HepG2 (cell line): ENCODE measurements at regions of chr6 and their contacts with region 1.

Region 1: DNA sequence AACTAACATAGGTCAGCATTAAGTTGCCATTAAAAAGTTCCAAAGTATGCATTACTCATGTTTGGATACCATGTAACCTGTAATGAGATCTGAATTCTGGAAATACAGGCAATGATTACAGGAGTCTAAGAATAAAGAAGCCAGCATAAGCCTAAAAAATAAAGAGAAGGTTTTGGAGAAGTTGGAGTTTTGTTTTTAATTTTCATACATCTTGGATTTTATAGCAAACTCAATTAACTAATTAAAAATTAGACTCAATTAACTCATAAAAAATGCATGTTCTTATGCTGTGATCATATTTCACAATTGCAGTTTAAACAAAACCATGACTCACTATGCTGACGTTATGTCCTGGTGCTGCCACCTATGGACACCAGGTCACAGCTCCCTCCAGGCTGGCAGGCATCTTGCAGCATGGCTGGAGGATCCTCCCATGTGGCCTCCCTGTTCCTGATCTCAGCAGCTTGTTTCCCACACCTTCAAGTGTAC is 648.8 kb upstream of the AGPAT4 start:
- DNase-seq: peak; percentile 78
- ATAC-seq: peak; percentile 100
- H3K4me3 ChIP-seq: no peak overlapping the region
- H3K27ac ChIP-seq: no peak overlapping the region
- H3K4me1 ChIP-seq: no peaks in the 10 kb centered on the region
- H3K27me3 ChIP-seq: no peaks in the 10 kb centered on the region
- CTCF ChIP-seq: peak; percentile 82
- EP300 ChIP-seq: no peak
- POLR2A ChIP-seq: no peak
- RAD21 ChIP-seq: no peak

Region 2: GRCh38 chr6:161748535-161749416 is 173.9 kb before region 1 on chr6:
- CTCF ChIA-PET with region 1: interaction called, 5 read pairs
- POLR2A ChIA-PET with region 1: no interaction called
- in situ Hi-C with region 1: no loop called
- intact Hi-C with region 1: loop called (anchors 1 kb)
- DNase-seq: peak; percentile 28
- ATAC-seq: peak; percentile 89
- H3K4me3 ChIP-seq: no peak overlapping the region
- H3K27ac ChIP-seq: no peak overlapping the region
- H3K4me1 ChIP-seq: no peaks in the 10 kb centered on the region
- H3K27me3 ChIP-seq: no peaks in the 10 kb centered on the region
- CTCF ChIP-seq: peak; percentile 74
- EP300 ChIP-seq: no peak
- POLR2A ChIP-seq: no peak
- RAD21 ChIP-seq: no peak

Region 3: DNA sequence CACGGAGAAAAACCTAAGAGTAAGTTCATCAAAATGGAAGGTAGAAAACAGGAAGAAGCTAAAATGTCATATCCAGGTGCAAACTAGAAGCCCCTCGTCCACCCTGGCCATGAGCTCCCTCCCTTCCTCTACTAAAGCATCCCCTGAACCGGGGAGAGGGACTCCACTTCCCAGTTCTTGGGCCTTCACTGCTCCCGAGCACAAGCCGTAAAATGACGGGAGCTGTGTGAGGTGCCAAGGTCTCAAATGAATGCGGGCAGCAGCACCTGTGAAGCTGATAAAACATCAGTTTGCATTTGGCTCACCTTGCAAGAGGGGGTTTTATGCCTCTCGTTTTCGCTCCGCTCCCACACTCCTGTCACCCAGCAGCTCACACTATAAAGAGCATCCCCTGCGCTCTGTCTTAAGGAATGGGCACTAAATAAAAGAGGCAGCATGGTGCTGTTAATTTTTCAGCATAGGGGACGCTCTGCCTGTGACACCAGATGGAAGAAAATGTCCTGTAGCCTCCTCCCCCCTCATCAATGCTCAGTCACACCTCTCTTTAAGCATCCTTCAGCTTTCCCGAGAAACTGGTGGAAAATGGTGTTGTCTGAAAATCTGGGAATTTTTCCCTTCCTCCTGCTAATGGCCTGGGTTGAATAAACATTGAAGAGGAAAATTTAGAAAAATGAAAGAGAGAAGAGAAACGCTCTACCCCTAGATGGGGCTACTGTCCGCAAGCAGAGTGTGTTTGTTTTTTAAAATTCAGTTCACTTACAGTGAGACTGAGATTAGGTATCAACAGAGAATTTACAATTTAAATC is 85.8 kb before region 1 on chr6:
- CTCF ChIA-PET with region 1: no interaction called
- POLR2A ChIA-PET with region 1: no interaction called
- in situ Hi-C with region 1: no loop called
- intact Hi-C with region 1: loop called (anchors 1 kb)
- DNase-seq: peak; percentile 35
- ATAC-seq: no peak
- H3K4me3 ChIP-seq: no peak overlapping the region
- H3K27ac ChIP-seq: no peak overlapping the region
- H3K4me1 ChIP-seq: peaks cover 23% of the 10 kb centered on the region
- H3K27me3 ChIP-seq: peaks cover 0 to 6% of the 10 kb centered on the region in 2 experiments; a peak in 2 of 5 replicates
- CTCF ChIP-seq: peak; percentile 56
- EP300 ChIP-seq: no peak
- POLR2A ChIP-seq: no peak
- RAD21 ChIP-seq: peak; percentile 56; the same call in 1 of the 2 replicates

Region 4: GRCh38 chr6:162056745-162057144 is 134.1 kb after region 1 on chr6:
- CTCF ChIA-PET with region 1: no interaction called
- POLR2A ChIA-PET with region 1: no interaction called
- in situ Hi-C with region 1: no loop called
- intact Hi-C with region 1: loop called (anchors 5 kb)
- DNase-seq: peak; percentile 51
- ATAC-seq: peak; percentile 62
- H3K4me3 ChIP-seq: peak overlapping the region in 1 of 3 experiments; percentile 43; a peak in 3 of 6 replicates
- H3K27ac ChIP-seq: no peak overlapping the region
- H3K4me1 ChIP-seq: peaks cover 34% of the 10 kb centered on the region
- H3K27me3 ChIP-seq: no peaks in the 10 kb centered on the region; a peak in 1 of 5 replicates
- CTCF ChIP-seq: no peak
- EP300 ChIP-seq: no peak
- POLR2A ChIP-seq: no peak
- RAD21 ChIP-seq: no peak